Activated CD8-positive, alpha-beta T cell treated with anti-CD3 and anti-CD28 coated beads for 36 hours (primary cell): ENCODE measurements at regions of chr14 and their contacts with region 1.

Region 1: DNA sequence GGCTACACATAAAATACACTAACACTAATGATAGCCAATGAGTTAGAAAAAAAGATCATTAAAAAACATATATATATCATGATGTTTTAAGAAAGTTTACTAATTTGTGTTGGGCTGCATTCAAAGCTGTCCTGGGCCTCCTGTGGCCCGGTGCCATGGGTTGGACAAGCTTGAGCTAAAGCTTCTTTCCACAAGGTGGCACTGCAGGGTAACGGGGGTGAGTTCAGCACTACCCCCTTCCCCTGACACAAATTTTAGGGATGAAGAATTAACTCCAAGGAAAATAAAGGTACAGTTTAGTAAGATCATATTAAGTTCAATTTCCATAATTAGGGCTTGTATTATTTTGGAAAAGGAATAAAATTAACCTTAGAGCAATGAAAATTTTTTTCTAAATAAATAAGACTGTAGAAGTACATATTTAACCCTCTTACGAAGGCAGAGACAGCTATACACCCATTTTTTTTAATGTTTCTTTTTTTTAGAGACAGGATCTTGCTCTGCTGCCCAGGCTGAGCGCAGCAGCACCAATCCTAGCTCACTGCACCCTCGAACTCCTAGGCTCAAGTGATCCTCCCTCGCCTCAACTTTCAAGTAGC is 38.9 kb downstream of the PPP1R13B start:
- DNase-seq: peak; percentile 77
- ATAC-seq: peak; percentile 85
- H3K4me3 Mint-ChIP-seq: no peak overlapping the region
- H3K27ac Mint-ChIP-seq: no peak overlapping the region
- H3K4me1 Mint-ChIP-seq: peaks cover 7% of the 10 kb centered on the region
- H3K27me3 Mint-ChIP-seq: no peaks in the 10 kb centered on the region
- CTCF ChIP-seq: peak; percentile 92

Region 2: DNA sequence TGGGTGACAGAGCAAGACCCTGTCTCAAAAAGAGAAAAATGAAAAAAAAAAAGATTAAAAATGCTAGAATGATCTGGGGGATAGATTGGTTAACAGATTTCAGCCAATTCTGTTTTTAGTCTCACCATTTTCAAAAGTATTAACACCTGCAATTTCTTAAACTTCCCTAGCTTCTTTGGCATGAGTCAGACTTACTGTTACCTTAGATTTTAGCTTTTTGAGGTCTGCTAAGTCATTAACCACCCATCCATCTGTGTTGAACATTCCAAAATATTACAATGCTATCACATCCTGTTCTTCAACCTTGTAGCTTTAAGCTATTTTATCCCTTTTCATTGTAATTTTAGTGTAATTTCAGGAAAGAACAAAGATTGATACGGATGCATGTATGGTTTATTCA is 20.4 kb before region 1 on chr14:
- CTCF ChIA-PET with region 1: interaction called, 21 read pairs
- POLR2A ChIA-PET with region 1: no interaction called
- intact Hi-C with region 1: no loop called
- DNase-seq: no peak
- ATAC-seq: no peak
- H3K4me3 Mint-ChIP-seq: no peak overlapping the region
- H3K27ac Mint-ChIP-seq: no peak overlapping the region
- H3K4me1 Mint-ChIP-seq: peaks cover 1% of the 10 kb centered on the region
- H3K27me3 Mint-ChIP-seq: no peaks in the 10 kb centered on the region
- CTCF ChIP-seq: no peak

Region 3: DNA sequence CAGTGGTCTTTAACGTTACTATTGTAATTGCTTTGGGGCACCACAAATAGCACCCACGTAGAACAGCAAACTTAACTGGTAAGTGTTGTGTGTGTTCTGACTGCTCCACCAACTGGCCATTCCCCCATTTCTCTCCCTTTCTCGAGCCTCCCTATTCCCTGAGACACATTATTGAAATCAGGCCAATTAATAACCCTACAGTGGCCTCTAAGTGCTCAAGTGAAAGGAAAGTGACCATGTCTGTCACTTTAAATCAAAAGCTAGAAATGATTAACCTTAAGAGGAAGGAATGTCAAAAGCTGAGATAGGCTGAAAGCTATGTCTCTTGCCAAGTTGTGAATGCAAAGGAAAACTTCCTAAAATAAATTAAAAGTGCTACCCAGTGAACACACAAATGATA is 16.6 kb after region 1 on chr14:
- CTCF ChIA-PET with region 1: interaction called, 22 read pairs
- POLR2A ChIA-PET with region 1: no interaction called
- intact Hi-C with region 1: no loop called
- DNase-seq: no peak
- ATAC-seq: no peak
- H3K4me3 Mint-ChIP-seq: no peak overlapping the region
- H3K27ac Mint-ChIP-seq: no peak overlapping the region
- H3K4me1 Mint-ChIP-seq: peaks cover 20% of the 10 kb centered on the region
- H3K27me3 Mint-ChIP-seq: no peaks in the 10 kb centered on the region
- CTCF ChIP-seq: no peak

Region 4: GRCh38 chr14:103899316-103899715 is 90.8 kb after region 1 on chr14:
- CTCF ChIA-PET with region 1: interaction called, 24 read pairs
- POLR2A ChIA-PET with region 1: interaction called, 3 read pairs
- intact Hi-C with region 1: no loop called
- DNase-seq: no peak
- ATAC-seq: no peak
- H3K4me3 Mint-ChIP-seq: no peak overlapping the region
- H3K27ac Mint-ChIP-seq: no peak overlapping the region
- H3K4me1 Mint-ChIP-seq: peaks cover 5% of the 10 kb centered on the region
- H3K27me3 Mint-ChIP-seq: no peaks in the 10 kb centered on the region
- CTCF ChIP-seq: no peak

Region 5: GRCh38 chr14:103920981-103921854 is 112.7 kb after region 1 on chr14:
- CTCF ChIA-PET with region 1: interaction called, 13 read pairs
- POLR2A ChIA-PET with region 1: no interaction called
- intact Hi-C with region 1: no loop called
- DNase-seq: peak; percentile 92
- ATAC-seq: peak; percentile 100
- H3K4me3 Mint-ChIP-seq: peak overlapping the region; percentile 85
- H3K27ac Mint-ChIP-seq: peak overlapping the region; percentile 78
- H3K4me1 Mint-ChIP-seq: peaks cover 15% of the 10 kb centered on the region
- H3K27me3 Mint-ChIP-seq: peaks cover 5% of the 10 kb centered on the region
- CTCF ChIP-seq: peak; percentile 93

Region 6: DNA sequence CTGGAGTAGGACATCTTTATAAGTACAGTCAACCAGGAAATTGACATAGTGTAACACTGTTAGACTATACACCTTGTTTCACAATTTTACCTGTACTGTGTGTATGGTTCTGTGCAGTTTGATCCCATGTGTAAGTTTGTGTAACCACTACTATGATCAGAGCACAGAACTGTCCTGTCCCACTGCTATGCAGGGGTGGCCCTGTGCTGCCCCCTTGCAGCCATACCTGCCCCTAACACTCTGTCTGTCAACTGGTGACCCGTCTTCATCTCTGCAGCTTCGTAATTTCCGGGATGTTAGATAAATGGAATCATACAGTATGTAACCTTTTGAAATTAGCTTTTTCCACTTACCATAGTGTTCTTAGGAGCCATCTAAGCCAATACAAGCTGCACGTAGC is 192.5 kb after region 1 on chr14:
- CTCF ChIA-PET with region 1: interaction called, 18 read pairs
- POLR2A ChIA-PET with region 1: no interaction called
- intact Hi-C with region 1: no loop called
- DNase-seq: peak; percentile 43
- ATAC-seq: peak; percentile 72
- H3K4me3 Mint-ChIP-seq: no peak overlapping the region
- H3K27ac Mint-ChIP-seq: no peak overlapping the region
- H3K4me1 Mint-ChIP-seq: no peaks in the 10 kb centered on the region
- H3K27me3 Mint-ChIP-seq: peaks cover 4% of the 10 kb centered on the region
- CTCF ChIP-seq: peak; percentile 30